CD4-positive, alpha-beta memory T cell (primary cell): ENCODE measurements at regions of chr3 and their contacts with region 1.

Region 1: GRCh38 chr3:14124615-14125190 is at the starts of genes CHCHD4 and TMEM43:
- DNase-seq: peak; percentile 97 to 99 (median 99)
- H3K4me3 ChIP-seq: peak within 1 kb of the TSS; percentile 53 to 78
- H3K4me3 Mint-ChIP-seq: peak within 1 kb of the TSS; percentile 95 to 98 (median 96)
- H3K27ac ChIP-seq: peak within 1 kb of the TSS; percentile 89
- H3K27ac Mint-ChIP-seq: peak within 1 kb of the TSS; percentile 96 to 97 (median 97)
- H3K4me1 ChIP-seq: peaks cover 38% of the 10 kb centered on the region
- H3K4me1 Mint-ChIP-seq: peaks cover 38 to 64% (median 54%) of the 10 kb centered on the region in 4 donors
- H3K27me3 ChIP-seq: no peaks in the 10 kb centered on the region
- H3K27me3 Mint-ChIP-seq: no peaks in the 10 kb centered on the region
- total RNA-seq, gene CHCHD4: 7.5 to 9.3 TPM
- total RNA-seq, gene TMEM43: 69.3 to 69.7 TPM

Region 2: DNA sequence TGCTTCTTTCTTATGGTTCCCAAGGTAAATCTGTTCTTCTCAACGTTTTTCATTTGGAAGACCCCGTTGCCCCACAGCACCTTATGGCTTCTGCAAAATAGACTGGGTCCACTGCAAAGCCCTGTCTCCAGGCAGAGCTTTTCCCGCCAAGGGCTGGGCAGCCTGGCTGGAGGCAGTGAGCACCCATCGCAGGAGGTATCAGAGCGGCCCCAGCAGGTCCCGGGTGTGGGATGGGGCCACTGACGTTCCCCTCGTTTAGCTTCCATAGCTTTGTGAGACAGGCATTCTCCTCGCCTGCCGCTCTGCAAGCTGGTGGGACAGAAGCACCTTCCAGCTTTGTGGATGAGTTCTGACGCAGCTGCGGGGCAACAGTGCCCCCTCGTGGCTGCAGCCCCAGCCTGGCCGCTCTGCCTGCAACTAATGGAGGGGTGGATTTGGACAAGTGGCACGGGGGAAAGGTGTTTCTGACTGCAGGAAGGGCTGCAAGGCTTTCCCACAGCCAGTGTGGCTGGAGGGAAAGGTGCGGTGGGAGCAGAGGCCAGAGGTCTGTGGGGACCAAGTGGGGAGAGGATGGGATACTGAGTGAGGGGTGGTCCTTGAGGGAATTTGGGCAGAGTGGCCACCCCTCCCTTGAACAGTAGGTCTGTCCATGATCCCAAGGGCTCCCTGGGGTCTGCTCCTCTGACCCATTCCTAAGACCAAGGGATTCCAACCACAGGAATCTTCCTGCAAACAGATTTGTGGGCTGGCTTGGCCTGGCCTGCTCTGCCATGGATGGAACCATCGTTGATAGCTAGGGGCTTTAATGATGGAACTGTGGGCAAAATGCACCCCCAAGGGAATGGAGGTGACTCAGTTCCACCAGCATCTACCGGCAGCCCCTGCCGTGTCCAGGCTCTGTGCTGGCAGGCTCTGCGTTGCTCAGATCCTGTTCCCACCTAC is 476.4 kb before region 1 on chr3:
- CTCF ChIA-PET with region 1: interaction called, 5 read pairs
- POLR2A ChIA-PET with region 1: no interaction called
- intact Hi-C with region 1: loop called (anchors 10 kb)
- DNase-seq: peak; percentile 62 to 76 (median 72)
- H3K4me3 ChIP-seq: no peak overlapping the region
- H3K4me3 Mint-ChIP-seq: peak overlapping the region in 6 of 8 donors; percentile 35 to 76 (median 56)
- H3K27ac ChIP-seq: no peak overlapping the region
- H3K27ac Mint-ChIP-seq: peak overlapping the region in 3 of 7 donors; percentile 10 to 83 (median 77)
- H3K4me1 ChIP-seq: peaks cover 41% of the 10 kb centered on the region
- H3K4me1 Mint-ChIP-seq: peaks cover 11 to 53% (median 35%) of the 10 kb centered on the region in 4 donors
- H3K27me3 ChIP-seq: no peaks in the 10 kb centered on the region
- H3K27me3 Mint-ChIP-seq: peaks cover 0 to 8% of the 10 kb centered on the region in 2 donors

Region 3: GRCh38 chr3:13972679-13973379 is 151.9 kb before region 1 on chr3:
- CTCF ChIA-PET with region 1: no interaction called
- POLR2A ChIA-PET with region 1: no interaction called
- intact Hi-C with region 1: no loop called
- DNase-seq: no peak
- H3K4me3 ChIP-seq: no peak overlapping the region
- H3K4me3 Mint-ChIP-seq: no peak overlapping the region
- H3K27ac ChIP-seq: no peak overlapping the region
- H3K27ac Mint-ChIP-seq: no peak overlapping the region
- H3K4me1 ChIP-seq: no peaks in the 10 kb centered on the region
- H3K4me1 Mint-ChIP-seq: no peaks in the 10 kb centered on the region
- H3K27me3 ChIP-seq: no peaks in the 10 kb centered on the region
- H3K27me3 Mint-ChIP-seq: peaks cover 0 to 1% of the 10 kb centered on the region in 2 donors

Region 4: DNA sequence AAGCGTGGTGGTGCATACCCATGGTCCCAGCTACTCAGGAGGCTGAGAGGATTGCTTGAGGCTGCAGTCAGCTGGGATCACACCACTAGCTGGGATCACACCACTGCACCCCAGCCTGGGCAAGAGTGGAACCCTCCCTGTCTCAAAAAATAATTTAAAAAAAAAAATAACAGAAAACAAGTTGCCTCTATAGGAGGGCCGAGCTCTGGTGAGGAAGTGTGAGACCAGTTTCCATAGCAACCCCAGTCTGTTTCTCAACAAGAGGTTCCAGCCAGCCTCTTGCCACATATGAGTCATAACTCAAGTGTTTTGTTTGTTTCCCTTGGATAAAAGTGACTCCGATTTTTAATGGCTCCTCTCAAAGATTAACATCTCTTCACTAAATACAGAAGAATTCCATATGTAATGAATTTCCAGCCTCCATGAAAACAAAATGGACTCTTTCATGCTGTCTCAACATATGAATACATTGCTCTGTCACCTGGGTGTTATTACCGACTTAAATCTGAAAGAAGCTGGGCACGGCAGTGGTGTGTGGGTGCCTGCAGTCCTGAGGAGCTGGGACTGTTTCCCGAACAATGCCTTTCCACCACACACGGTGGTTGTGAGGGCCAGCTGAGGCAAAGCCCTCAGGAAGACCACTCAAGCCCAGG is 19.8 kb after region 1 on chr3:
- CTCF ChIA-PET with region 1: interaction called, 41 read pairs
- POLR2A ChIA-PET with region 1: interaction called, 342 read pairs
- intact Hi-C with region 1: loop called (anchors 1 kb)
- DNase-seq: peak; percentile 87 to 96 (median 93)
- H3K4me3 ChIP-seq: peak overlapping the region in 1 of 2 donors; percentile 29
- H3K4me3 Mint-ChIP-seq: peak overlapping the region; percentile 73 to 89 (median 82)
- H3K27ac ChIP-seq: peak overlapping the region; percentile 95
- H3K27ac Mint-ChIP-seq: peak overlapping the region; percentile 95 to 100 (median 100)
- H3K4me1 ChIP-seq: peaks cover 67% of the 10 kb centered on the region
- H3K4me1 Mint-ChIP-seq: peaks cover 45 to 72% (median 60%) of the 10 kb centered on the region in 4 donors
- H3K27me3 ChIP-seq: no peaks in the 10 kb centered on the region
- H3K27me3 Mint-ChIP-seq: no peaks in the 10 kb centered on the region

Region 5: GRCh38 chr3:14431892-14432834 is 307.5 kb after region 1 on chr3:
- CTCF ChIA-PET with region 1: no interaction called
- POLR2A ChIA-PET with region 1: interaction called, 12 read pairs
- intact Hi-C with region 1: loop called (anchors 2 kb)
- DNase-seq: peak; percentile 93 to 99 (median 94)
- H3K4me3 ChIP-seq: peak overlapping the region; percentile 55 to 77
- H3K4me3 Mint-ChIP-seq: peak overlapping the region; percentile 77 to 93 (median 80)
- H3K27ac ChIP-seq: peak overlapping the region; percentile 98
- H3K27ac Mint-ChIP-seq: peak overlapping the region; percentile 97 to 100 (median 100)
- H3K4me1 ChIP-seq: peaks cover 97% of the 10 kb centered on the region
- H3K4me1 Mint-ChIP-seq: peaks cover 64 to 98% (median 87%) of the 10 kb centered on the region in 4 donors
- H3K27me3 ChIP-seq: no peaks in the 10 kb centered on the region
- H3K27me3 Mint-ChIP-seq: no peaks in the 10 kb centered on the region